ENCODE measurements at regions of chr7 and their contacts with region 1.

Region 1: DNA sequence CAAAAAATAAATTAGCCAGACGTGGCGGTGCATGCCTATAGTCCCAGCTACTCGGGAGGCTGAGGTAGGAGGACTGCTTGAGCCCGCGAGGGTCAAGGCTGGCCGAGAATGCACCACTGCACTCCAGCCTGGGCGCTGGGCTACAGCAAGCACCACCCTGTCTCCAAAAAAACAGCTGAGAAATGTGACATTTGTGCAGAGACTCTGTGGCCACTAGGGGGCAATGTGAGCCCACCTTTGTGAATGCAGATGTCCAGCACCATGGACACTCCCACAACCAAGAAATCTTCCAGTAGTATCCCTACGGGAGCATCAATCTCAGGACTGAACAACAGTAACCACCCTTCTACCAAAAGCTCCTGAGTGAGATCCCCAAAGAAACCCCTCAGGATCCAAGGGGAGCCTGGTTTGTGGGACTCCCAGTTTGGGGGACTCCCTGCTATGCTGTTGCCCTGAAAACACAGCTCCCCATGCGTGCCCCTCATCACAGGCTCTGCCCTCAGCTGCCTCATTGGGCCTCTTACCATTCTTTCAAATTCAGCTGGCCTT is 6.2 kb upstream of the AHCYL2 start:
- DNase-seq: peak; percentile 84
- ATAC-seq: peak; percentile 91
- H3K4me3 Mint-ChIP-seq: no peak overlapping the region
- H3K27ac Mint-ChIP-seq: no peak overlapping the region
- H3K4me1 Mint-ChIP-seq: peaks cover 17% of the 10 kb centered on the region
- H3K27me3 Mint-ChIP-seq: peaks cover 9% of the 10 kb centered on the region

Region 2: GRCh38 chr7:128890306-128891109 is 328.1 kb before region 1 on chr7:
- CTCF ChIA-PET with region 1: no interaction called
- DNase-seq: no peak
- ATAC-seq: peak; percentile 17
- H3K4me3 Mint-ChIP-seq: no peak overlapping the region
- H3K27ac Mint-ChIP-seq: no peak overlapping the region
- H3K4me1 Mint-ChIP-seq: no peaks in the 10 kb centered on the region
- H3K27me3 Mint-ChIP-seq: peaks cover 16% of the 10 kb centered on the region

Region 3: DNA sequence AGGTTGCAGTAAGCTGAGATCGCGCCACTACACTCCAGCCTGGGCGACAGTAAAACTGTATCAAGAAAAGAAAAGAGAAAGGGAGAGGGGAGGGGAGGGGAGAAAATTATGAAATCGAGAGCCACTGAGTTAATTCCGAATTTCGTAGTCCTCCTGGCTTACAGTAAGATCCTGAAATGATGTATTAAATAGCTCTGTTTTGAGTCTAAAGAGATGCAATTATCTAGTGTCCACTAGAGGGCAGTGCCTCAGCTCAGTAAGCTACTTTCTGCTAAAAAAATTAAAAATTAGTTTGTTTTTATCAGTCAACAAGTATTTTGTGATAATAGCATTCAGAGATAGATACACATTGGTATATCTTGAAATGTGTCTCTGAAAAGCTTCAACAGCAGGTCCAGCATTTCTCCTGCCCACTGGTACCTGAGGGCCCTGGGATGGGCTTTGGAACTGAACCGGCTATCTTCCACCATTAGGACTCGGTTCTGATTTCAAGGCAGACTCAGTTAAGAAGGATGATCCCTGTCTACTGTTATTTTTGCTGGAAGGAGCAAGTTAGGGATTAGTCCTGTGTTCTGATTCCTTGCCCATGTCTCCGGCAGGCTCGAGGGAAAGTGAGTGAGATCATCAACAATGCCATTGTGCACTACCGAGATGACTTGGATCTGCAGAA is 54.6 kb before region 1 on chr7:
- CTCF ChIA-PET with region 1: interaction called, 20 read pairs
- DNase-seq: no peak
- ATAC-seq: peak; percentile 51
- H3K4me3 Mint-ChIP-seq: no peak overlapping the region
- H3K27ac Mint-ChIP-seq: no peak overlapping the region
- H3K4me1 Mint-ChIP-seq: peaks cover 3% of the 10 kb centered on the region
- H3K27me3 Mint-ChIP-seq: no peaks in the 10 kb centered on the region

Region 4: DNA sequence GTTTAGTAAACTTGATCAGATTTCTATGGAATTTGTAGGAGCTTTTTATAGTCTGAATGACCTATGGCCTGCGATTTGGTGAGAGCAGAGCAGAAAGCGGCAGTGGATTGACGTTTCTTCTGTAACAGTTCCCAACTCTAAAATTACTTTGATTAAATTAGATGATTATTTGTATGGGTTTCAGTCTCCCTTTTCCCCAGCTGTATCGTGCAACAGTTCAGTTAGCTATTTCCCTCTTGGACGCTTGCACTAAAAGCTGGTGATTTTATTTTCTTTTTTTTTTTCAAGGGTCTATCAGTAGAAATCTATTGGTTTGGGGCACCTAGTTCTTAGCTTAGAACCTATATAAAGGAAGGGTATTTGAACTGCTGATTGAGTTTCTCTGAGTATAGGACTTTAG is 13.1 kb after region 1 on chr7:
- CTCF ChIA-PET with region 1: interaction called, 22 read pairs
- DNase-seq: no peak
- ATAC-seq: no peak
- H3K4me3 Mint-ChIP-seq: no peak overlapping the region
- H3K27ac Mint-ChIP-seq: no peak overlapping the region
- H3K4me1 Mint-ChIP-seq: peaks cover 7% of the 10 kb centered on the region
- H3K27me3 Mint-ChIP-seq: no peaks in the 10 kb centered on the region

Region 5: GRCh38 chr7:129258649-129259389 is 40.2 kb after region 1 on chr7:
- CTCF ChIA-PET with region 1: interaction called, 76 read pairs
- DNase-seq: no peak
- ATAC-seq: no peak
- H3K4me3 Mint-ChIP-seq: no peak overlapping the region
- H3K27ac Mint-ChIP-seq: peak overlapping the region; percentile 43
- H3K4me1 Mint-ChIP-seq: peaks cover 20% of the 10 kb centered on the region
- H3K27me3 Mint-ChIP-seq: no peaks in the 10 kb centered on the region

Region 6: GRCh38 chr7:129285111-129285510 is 66.5 kb after region 1 on chr7:
- CTCF ChIA-PET with region 1: interaction called, 24 read pairs
- DNase-seq: no peak
- ATAC-seq: no peak
- H3K4me3 Mint-ChIP-seq: no peak overlapping the region
- H3K27ac Mint-ChIP-seq: no peak overlapping the region
- H3K4me1 Mint-ChIP-seq: peaks cover 3% of the 10 kb centered on the region
- H3K27me3 Mint-ChIP-seq: no peaks in the 10 kb centered on the region

Region 7: GRCh38 chr7:129343099-129343700 is 124.6 kb after region 1 on chr7:
- CTCF ChIA-PET with region 1: interaction called, 15 read pairs
- DNase-seq: no peak
- ATAC-seq: no peak
- H3K4me3 Mint-ChIP-seq: no peak overlapping the region
- H3K27ac Mint-ChIP-seq: no peak overlapping the region
- H3K4me1 Mint-ChIP-seq: peaks cover 41% of the 10 kb centered on the region
- H3K27me3 Mint-ChIP-seq: peaks cover 7% of the 10 kb centered on the region

Region 8: GRCh38 chr7:129376076-129376777 is 157.6 kb after region 1 on chr7:
- CTCF ChIA-PET with region 1: interaction called, 15 read pairs
- DNase-seq: peak; percentile 75
- ATAC-seq: peak; percentile 75
- H3K4me3 Mint-ChIP-seq: no peak overlapping the region
- H3K27ac Mint-ChIP-seq: peak overlapping the region; percentile 79
- H3K4me1 Mint-ChIP-seq: peaks cover 48% of the 10 kb centered on the region
- H3K27me3 Mint-ChIP-seq: no peaks in the 10 kb centered on the region